Posterior cingulate gyrus (tissue), 11 donors: ENCODE measurements at regions of chr9 and their contacts with region 1.

Region 1: DNA sequence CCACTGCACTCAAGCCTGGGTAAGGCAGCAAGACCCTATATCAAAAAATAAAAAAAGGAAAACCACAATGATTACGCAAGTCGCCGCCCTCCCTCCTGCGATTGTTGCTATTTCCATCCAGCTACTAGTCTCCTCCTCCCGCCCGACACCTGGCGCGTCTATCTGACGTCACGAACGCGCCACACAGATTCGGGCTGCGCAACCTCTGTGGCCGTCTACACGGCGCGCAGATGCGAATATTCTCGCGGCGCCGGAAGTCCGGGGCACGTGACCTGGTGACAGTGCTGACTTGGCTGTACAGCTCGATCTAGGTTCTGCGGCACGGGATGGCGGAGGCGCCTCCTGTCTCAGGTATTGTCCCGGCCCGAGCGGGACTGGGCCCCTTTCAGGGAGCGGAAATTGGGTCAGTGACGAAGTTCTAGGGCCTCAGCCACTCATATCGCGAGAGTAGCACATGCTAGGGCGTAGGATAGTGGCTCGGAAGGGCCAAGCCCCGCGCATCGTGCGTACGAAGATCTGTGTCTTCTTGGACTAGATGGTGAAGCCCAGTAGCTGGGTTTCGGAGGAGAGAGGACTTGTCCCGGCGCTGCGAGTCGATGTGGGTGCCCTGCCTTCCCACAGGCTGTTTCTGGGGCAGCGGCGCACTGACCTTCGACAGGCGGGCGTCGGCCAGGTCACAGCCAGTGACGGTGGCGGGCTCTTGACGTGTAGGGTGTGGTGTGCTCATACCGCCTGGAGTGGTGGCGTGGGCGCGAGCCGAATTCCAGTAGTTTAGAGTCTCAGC is at the start of gene NFX1:
- DNase-seq: peak; percentile 90 to 99 (median 93)

Region 2: DNA sequence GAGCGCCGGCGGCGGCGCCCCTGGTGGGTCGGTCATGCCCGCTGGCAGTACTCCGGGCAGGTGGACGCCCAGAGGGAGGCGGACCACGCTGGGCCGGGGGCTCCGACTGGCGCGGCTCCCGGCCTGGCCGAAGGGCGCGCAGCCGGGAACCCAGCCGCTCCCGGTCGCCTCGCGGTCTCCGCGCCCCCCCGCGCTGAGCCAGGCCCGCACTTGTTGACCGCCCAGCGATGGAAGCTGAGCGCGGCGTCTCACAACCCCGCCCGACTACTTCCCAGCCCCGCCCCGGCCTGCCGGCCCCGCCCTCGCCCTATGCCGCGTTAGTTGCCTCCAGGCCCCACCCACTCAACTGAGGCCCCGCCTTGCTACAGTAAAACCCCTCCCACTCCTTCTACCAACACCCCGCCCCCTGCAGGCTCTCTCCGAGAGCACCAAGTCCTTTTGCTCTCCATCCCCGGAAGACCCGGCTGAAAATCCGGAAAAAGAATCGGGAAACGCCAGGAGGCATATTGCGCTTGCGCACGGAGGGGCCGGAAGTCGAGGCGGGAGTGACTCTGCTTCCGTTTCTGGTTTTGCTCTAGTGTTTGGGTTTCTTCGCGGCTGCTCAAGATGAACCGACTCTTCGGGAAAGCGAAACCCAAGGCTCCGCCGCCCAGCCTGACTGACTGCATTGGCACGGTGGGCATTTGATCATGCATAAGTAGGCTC is 25.8 kb before region 1 on chr9 and contains the starts of genes BAG1 and CHMP5:
- intact Hi-C with region 1: loop called (anchors 2 kb)
- DNase-seq: peak; percentile 98 to 100 (median 100)

Region 3: DNA sequence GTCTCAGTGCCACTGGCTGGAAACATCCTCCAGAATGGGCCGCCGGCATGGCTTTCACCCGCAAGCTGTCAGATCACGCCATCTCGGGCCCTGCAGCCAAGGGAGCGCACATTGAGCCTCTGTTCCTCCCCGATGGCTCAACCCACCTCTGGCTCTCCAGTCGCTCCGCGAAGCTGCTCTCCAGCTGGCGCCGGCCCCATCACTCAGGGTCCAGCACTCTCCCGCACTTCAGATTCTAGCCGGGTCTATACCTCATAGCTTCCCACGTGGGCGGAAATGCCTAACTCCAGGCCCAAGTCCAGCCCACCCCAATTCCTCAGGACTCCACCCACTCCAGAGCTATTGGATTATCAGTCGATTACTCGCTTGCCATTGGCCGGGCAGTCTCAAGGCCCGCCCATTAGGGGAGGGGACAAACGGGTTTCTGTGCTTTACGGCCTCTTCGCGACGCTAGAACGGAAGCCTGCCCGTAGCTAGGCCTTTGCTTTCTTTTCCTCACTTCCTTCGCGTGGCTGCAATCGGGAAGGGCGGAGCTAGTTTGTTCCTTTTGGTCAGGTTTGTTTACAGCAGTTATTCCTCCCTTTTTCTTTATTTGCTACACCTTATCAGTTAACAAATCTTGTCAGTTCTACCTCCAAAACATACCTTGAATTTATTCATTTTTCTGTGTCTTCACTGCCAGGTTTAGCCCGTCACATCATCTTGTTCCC is 183.4 kb after region 1 on chr9 and contains the start of gene NOL6:
- intact Hi-C with region 1: loop called (anchors 10 kb)
- DNase-seq: peak; percentile 95 to 100 (median 97)

Region 4: GRCh38 chr9:33698267-33698666 is 407.8 kb after region 1 on chr9:
- intact Hi-C with region 1: no loop called
- DNase-seq: no peak